Endothelial cell of umbilical vein (primary cell): ENCODE measurements at regions of chr1 and their contacts with region 1.

Region 1: GRCh38 chr1:66331657-66332547 is 202.1 kb upstream of the SGIP1 start:
- DNase-seq: peak; percentile 97
- H3K4me3 ChIP-seq: peak overlapping the region; percentile 77 to 98 (median 92)
- H3K27ac ChIP-seq: peak overlapping the region; percentile 95
- H3K4me1 ChIP-seq: peaks cover 30% of the 10 kb centered on the region
- H3K27me3 ChIP-seq: no peaks in the 10 kb centered on the region
- CTCF ChIP-seq: peak; percentile 21 to 57
- POLR2A ChIP-seq: peak; percentile 97

Region 2: GRCh38 chr1:66265796-66266195 is 66.1 kb before region 1 on chr1:
- CTCF ChIA-PET with region 1: interaction called, 51 read pairs
- POLR2A ChIA-PET with region 1: interaction called, 13 read pairs
- dilution Hi-C with region 1: no loop called
- intact Hi-C with region 1: loop called (anchors 1 kb)
- DNase-seq: peak; percentile 83
- H3K4me3 ChIP-seq: no peak overlapping the region
- H3K27ac ChIP-seq: peak overlapping the region; percentile 89
- H3K4me1 ChIP-seq: peaks cover 66% of the 10 kb centered on the region
- H3K27me3 ChIP-seq: no peaks in the 10 kb centered on the region
- CTCF ChIP-seq: no peak
- POLR2A ChIP-seq: no peak

Region 3: GRCh38 chr1:66300972-66301451 is 30.9 kb before region 1 on chr1:
- CTCF ChIA-PET with region 1: interaction called, 11 read pairs
- POLR2A ChIA-PET with region 1: interaction called, 7 read pairs
- dilution Hi-C with region 1: no loop called
- intact Hi-C with region 1: loop called (anchors 1 kb)
- DNase-seq: peak; percentile 86
- H3K4me3 ChIP-seq: peak overlapping the region; percentile 2 to 82 (median 64)
- H3K27ac ChIP-seq: peak overlapping the region; percentile 92
- H3K4me1 ChIP-seq: peaks cover 6% of the 10 kb centered on the region
- H3K27me3 ChIP-seq: no peaks in the 10 kb centered on the region
- CTCF ChIP-seq: no peak
- POLR2A ChIP-seq: no peak

Region 4: DNA sequence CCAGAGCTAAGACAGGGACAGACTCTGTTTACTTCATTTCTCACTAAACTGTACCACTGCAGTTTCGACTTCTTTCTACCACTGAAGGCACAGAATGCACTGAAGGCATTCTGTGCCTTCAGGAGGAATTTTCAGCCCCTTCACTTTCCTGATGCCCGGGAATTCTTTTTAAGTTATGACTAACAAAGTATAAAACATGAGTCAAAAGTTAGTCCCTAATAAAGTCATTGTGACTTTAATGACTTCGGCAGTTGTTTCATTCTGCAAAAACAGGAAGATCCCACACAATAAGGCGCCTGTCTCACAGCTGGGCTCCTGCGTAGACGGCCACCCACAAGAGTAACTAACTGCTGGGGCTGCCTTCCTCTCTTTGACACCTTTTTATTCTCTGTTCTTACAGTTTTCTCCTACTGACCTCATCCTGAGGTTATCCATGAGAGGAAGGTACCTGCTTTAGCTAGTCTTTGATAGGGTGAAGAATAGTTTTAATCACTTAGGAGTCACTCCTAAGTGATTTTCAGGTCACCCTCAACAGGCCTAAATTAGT is 18.2 kb after region 1 on chr1:
- CTCF ChIA-PET with region 1: interaction called, 15 read pairs
- POLR2A ChIA-PET with region 1: interaction called, 8 read pairs
- dilution Hi-C with region 1: no loop called
- intact Hi-C with region 1: loop called (anchors 1 kb)
- DNase-seq: peak; percentile 93
- H3K4me3 ChIP-seq: peak overlapping the region in 1 of 3 experiments; percentile 3
- H3K27ac ChIP-seq: peak overlapping the region; percentile 96
- H3K4me1 ChIP-seq: peaks cover 100% of the 10 kb centered on the region
- H3K27me3 ChIP-seq: no peaks in the 10 kb centered on the region
- CTCF ChIP-seq: no peak
- POLR2A ChIP-seq: peak; percentile 14

Region 5: GRCh38 chr1:66436378-66437145 is 104.7 kb after region 1 on chr1:
- CTCF ChIA-PET with region 1: interaction called, 3 read pairs
- POLR2A ChIA-PET with region 1: interaction called, 3 read pairs
- dilution Hi-C with region 1: no loop called
- intact Hi-C with region 1: loop called (anchors 1 kb)
- DNase-seq: peak; percentile 46
- H3K4me3 ChIP-seq: no peak overlapping the region
- H3K27ac ChIP-seq: no peak overlapping the region
- H3K4me1 ChIP-seq: peaks cover 34% of the 10 kb centered on the region
- H3K27me3 ChIP-seq: no peaks in the 10 kb centered on the region
- CTCF ChIP-seq: peak; percentile 13 to 31
- POLR2A ChIP-seq: no peak

Region 6: GRCh38 chr1:66542811-66543767 is 211.2 kb after region 1 on chr1:
- CTCF ChIA-PET with region 1: no interaction called
- POLR2A ChIA-PET with region 1: no interaction called
- dilution Hi-C with region 1: loop called (anchors 25 kb)
- intact Hi-C with region 1: loop called (anchors 2 kb)
- DNase-seq: peak; percentile 97
- H3K4me3 ChIP-seq: no peak overlapping the region
- H3K27ac ChIP-seq: peak overlapping the region; percentile 90
- H3K4me1 ChIP-seq: peaks cover 36% of the 10 kb centered on the region
- H3K27me3 ChIP-seq: no peaks in the 10 kb centered on the region
- CTCF ChIP-seq: no peak
- POLR2A ChIP-seq: no peak

Region 7: DNA sequence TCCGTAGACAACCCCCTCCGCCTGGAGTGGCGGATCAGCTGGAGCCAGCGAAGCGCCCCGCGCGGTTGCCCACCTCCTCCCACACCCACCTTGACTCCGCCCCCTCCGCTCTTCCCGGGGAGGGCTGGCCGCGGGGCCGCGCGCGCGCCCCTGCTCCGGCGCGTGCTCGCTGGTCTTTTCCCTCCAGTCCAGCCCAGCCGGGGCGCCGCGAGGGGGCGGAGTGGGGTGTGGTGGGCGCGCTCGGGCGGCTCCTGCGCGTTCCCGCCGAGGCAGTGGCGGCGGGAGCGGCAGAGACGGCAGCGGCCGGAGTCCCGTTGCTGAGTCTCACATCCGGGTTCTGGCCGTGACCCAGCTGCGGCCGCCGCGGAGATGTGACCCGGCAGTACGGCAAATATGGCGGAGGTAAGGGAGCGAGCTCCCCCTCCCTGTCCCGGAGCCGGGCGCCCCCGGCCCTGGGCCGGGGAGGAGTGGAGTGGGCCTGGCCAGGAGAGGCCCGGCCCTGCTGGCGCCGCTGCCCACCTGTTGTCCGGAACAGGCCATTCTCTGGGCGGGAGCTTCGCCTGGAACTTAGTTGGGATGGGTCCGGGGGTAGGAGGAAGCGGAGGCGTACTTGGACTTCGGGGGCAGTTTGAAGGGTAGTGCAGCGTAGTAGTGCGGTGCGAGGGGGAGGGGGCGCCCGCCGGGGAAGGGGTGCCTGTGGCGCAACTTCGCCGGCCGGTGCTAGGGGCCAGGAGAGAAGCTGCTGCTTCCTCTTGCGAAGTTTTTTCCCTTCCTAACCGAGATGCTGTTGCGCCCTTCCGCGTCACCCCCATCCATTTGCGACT is 598.3 kb after region 1 on chr1:
- CTCF ChIA-PET with region 1: no interaction called
- POLR2A ChIA-PET with region 1: no interaction called
- dilution Hi-C with region 1: no loop called
- intact Hi-C with region 1: loop called (anchors 10 kb)
- DNase-seq: peak; percentile 96
- H3K4me3 ChIP-seq: peak overlapping the region; percentile 98 to 99 (median 99)
- H3K27ac ChIP-seq: peak overlapping the region; percentile 84
- H3K4me1 ChIP-seq: peaks cover 52% of the 10 kb centered on the region
- H3K27me3 ChIP-seq: no peaks in the 10 kb centered on the region
- CTCF ChIP-seq: peak in 1 of 2 donors; percentile 13
- POLR2A ChIP-seq: no peak